ENCODE measurements at regions of chrX and their contacts with region 1.

Region 1: DNA sequence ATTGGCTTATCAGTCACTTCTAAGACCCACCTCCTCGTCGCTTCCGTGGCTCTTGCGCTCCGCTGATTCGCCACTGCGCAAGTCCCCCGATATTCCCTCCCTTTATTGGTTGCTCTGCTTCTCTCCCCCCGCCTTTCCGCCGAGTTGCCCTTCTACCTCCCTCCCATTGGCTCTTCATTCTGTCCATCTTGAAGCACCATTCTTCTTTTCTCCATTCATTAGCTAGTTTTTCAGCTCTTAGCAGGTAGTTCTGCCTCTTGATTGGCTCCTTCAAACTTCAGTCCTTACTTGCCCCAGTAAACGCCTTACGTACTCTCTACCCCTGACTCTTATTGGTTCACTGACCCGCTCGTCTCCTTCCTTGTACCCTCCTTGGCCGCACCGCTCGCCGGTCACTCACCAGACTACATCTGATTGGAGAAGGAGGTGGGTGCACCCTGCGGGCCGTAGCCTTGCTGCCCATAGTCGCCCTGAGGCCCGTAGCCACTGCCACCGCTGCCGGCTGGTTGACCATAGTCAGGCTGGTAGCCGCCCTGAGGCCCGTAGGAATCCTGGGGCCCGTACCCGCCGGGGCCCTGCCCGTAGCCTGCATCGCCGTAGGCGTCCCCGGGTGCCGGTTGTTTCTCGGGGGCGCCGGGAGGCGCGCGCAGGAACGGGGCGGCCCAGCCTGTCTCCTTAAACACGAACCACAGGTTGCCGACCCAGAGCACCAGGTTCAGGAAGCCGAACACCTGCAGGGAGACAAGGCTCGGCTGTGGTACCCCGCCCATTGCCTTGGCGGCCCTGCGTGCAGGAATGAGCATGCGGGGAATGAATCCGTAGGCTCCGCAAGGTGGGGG is 5.1 kb upstream of the PRICKLE3 start:
- DNase-seq: peak; percentile 64 to 97 (median 79)
- ATAC-seq: peak; percentile 88
- H3K4me3 ChIP-seq: peak overlapping the region; percentile 74
- H3K4me3 Mint-ChIP-seq: peak overlapping the region; percentile 90
- H3K27ac ChIP-seq: peak overlapping the region; percentile 70 to 72
- H3K27ac Mint-ChIP-seq: peak overlapping the region; percentile 67
- H3K4me1 ChIP-seq: peaks cover 27% of the 10 kb centered on the region
- H3K4me1 Mint-ChIP-seq: peaks cover 28% of the 10 kb centered on the region
- H3K27me3 ChIP-seq: no peaks in the 10 kb centered on the region
- H3K27me3 Mint-ChIP-seq: no peaks in the 10 kb centered on the region
- CTCF ChIP-seq: no peak

Region 2: GRCh38 chrX:49155900-49156837 is 35.1 kb before region 1 on chrX:
- CTCF ChIA-PET with region 1: interaction called, 5 read pairs
- POLR2A ChIA-PET with region 1: interaction called, 22 read pairs
- intact Hi-C with region 1: no loop called
- DNase-seq: peak; percentile 74 to 92 (median 83)
- ATAC-seq: peak; percentile 91
- H3K4me3 ChIP-seq: peak overlapping the region; percentile 61
- H3K4me3 Mint-ChIP-seq: peak overlapping the region; percentile 94
- H3K27ac ChIP-seq: peak overlapping the region; percentile 65 to 79
- H3K27ac Mint-ChIP-seq: peak overlapping the region; percentile 99
- H3K4me1 ChIP-seq: peaks cover 14% of the 10 kb centered on the region
- H3K4me1 Mint-ChIP-seq: peaks cover 20% of the 10 kb centered on the region
- H3K27me3 ChIP-seq: no peaks in the 10 kb centered on the region
- H3K27me3 Mint-ChIP-seq: no peaks in the 10 kb centered on the region
- CTCF ChIP-seq: peak; percentile 61

Region 3: GRCh38 chrX:49214996-49215526 is 23.8 kb after region 1 on chrX:
- CTCF ChIA-PET with region 1: no interaction called
- POLR2A ChIA-PET with region 1: no interaction called
- intact Hi-C with region 1: no loop called
- DNase-seq: no peak
- ATAC-seq: no peak
- H3K4me3 ChIP-seq: no peak overlapping the region
- H3K4me3 Mint-ChIP-seq: no peak overlapping the region
- H3K27ac ChIP-seq: no peak overlapping the region
- H3K27ac Mint-ChIP-seq: no peak overlapping the region
- H3K4me1 ChIP-seq: no peaks in the 10 kb centered on the region
- H3K4me1 Mint-ChIP-seq: no peaks in the 10 kb centered on the region
- H3K27me3 ChIP-seq: no peaks in the 10 kb centered on the region
- H3K27me3 Mint-ChIP-seq: no peaks in the 10 kb centered on the region
- CTCF ChIP-seq: no peak

Region 4: DNA sequence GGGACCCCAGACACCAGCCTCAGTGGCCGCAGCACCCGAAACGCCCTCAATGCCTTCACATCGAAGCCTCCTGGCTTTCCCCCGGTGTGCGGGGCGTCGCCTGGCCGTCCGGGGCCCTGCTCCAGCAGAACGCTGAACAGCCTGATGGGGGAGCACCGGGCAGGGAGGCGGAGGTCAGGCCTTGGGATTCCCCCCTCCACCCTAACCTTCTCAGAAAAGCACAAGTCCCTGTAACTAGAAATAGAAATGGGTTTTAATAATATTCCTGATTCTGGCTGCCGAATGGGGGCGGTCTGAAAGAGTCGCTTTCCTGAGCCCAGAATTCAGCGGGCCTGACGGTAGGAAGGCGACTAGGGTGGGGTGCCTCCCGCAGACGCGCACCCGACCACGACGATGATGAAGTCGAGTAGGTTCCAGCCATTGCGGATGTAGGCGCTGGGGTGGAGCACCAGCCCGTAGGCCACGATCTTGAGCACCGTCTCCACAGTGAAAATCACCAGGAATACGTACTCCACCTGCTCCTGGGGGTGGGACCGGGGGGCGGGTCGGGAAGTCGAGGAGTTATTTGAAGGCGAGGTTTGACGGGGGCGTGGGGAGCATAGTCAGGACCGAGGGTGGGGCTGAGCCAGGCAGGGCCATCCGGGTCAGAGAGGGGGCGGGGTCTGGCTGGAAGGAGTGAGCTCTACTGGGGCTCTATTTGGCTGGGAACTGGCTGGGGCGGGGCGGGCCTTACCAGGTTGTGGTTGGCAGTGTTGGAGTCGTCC is 39.4 kb after region 1 on chrX:
- CTCF ChIA-PET with region 1: no interaction called
- POLR2A ChIA-PET with region 1: interaction called, 4 read pairs
- intact Hi-C with region 1: loop called in 1 of 2 experiments (anchors 5 kb)
- DNase-seq: peak; percentile 20 to 73 (median 42)
- ATAC-seq: peak; percentile 64
- H3K4me3 ChIP-seq: peak overlapping the region; percentile 53
- H3K4me3 Mint-ChIP-seq: peak overlapping the region; percentile 77
- H3K27ac ChIP-seq: peak overlapping the region in 1 of 2 donors; percentile 13
- H3K27ac Mint-ChIP-seq: peak overlapping the region; percentile 87
- H3K4me1 ChIP-seq: peaks cover 21% of the 10 kb centered on the region
- H3K4me1 Mint-ChIP-seq: peaks cover 30% of the 10 kb centered on the region
- H3K27me3 ChIP-seq: no peaks in the 10 kb centered on the region
- H3K27me3 Mint-ChIP-seq: no peaks in the 10 kb centered on the region
- CTCF ChIP-seq: no peak

Region 5: GRCh38 chrX:49269010-49269767 is 77.9 kb after region 1 on chrX:
- CTCF ChIA-PET with region 1: interaction called, 3 read pairs
- POLR2A ChIA-PET with region 1: interaction called, 19 read pairs
- intact Hi-C with region 1: loop called in 1 of 2 experiments (anchors 1 kb)
- DNase-seq: peak; percentile 85 to 98 (median 90)
- ATAC-seq: peak; percentile 82
- H3K4me3 ChIP-seq: peak overlapping the region; percentile 69
- H3K4me3 Mint-ChIP-seq: peak overlapping the region; percentile 91
- H3K27ac ChIP-seq: peak overlapping the region; percentile 96 to 98
- H3K27ac Mint-ChIP-seq: peak overlapping the region; percentile 99
- H3K4me1 ChIP-seq: peaks cover 57% of the 10 kb centered on the region
- H3K4me1 Mint-ChIP-seq: peaks cover 49% of the 10 kb centered on the region
- H3K27me3 ChIP-seq: no peaks in the 10 kb centered on the region
- H3K27me3 Mint-ChIP-seq: no peaks in the 10 kb centered on the region
- CTCF ChIP-seq: no peak

Region 6: DNA sequence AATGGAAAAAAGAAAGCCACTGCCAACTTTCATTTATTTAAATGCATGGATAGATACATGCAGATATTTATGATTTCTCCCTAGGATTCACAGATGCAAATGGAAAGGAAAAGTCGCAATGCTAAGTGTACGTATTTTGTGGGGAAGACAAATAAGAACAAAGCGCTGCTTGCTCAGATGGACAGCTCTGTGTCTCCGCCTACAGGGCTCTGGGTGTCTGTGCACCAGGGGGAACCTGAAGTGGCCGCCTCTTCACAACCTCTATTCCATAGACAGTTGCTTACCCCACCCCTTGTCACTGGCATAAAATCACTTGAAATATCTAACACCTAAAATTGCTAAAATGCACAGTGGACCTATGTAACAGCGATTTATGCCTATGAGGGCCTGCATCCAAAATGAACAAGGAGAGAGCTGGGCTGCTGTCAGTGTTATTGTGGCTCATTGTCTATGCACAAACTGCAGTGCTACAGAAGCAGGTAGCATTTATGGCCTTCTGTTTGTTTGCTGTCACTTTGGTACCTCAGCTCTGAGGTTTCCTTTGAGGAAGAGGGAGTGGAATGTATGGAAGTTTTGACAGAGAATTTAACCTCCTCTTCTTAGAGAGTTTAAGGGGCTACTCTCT is 563.1 kb after region 1 on chrX:
- CTCF ChIA-PET with region 1: no interaction called
- POLR2A ChIA-PET with region 1: no interaction called
- intact Hi-C with region 1: loop called (anchors 1 to 5 kb)
- DNase-seq: peak; percentile 15 to 69 (median 36)
- ATAC-seq: peak; percentile 88
- H3K4me3 ChIP-seq: no peak overlapping the region
- H3K4me3 Mint-ChIP-seq: no peak overlapping the region
- H3K27ac ChIP-seq: no peak overlapping the region
- H3K27ac Mint-ChIP-seq: no peak overlapping the region
- H3K4me1 ChIP-seq: no peaks in the 10 kb centered on the region
- H3K4me1 Mint-ChIP-seq: peaks cover 4% of the 10 kb centered on the region
- H3K27me3 ChIP-seq: peaks cover 0 to 3% of the 10 kb centered on the region in 2 experiments
- H3K27me3 Mint-ChIP-seq: peaks cover 19% of the 10 kb centered on the region
- CTCF ChIP-seq: peak; percentile 57